CD8-positive, alpha-beta T cell (primary cell): ENCODE measurements at regions of chr11 and their contacts with region 1.

Region 1: GRCh38 chr11:47932544-47932943 is 47.8 kb upstream of the PTPRJ start:
- DNase-seq: no peak
- ATAC-seq: no peak
- H3K4me3 ChIP-seq: no peak overlapping the region
- H3K4me3 Mint-ChIP-seq: no peak overlapping the region
- H3K27ac ChIP-seq: no peak overlapping the region
- H3K27ac Mint-ChIP-seq: no peak overlapping the region
- H3K4me1 ChIP-seq: peaks cover 9% of the 10 kb centered on the region
- H3K4me1 Mint-ChIP-seq: peaks cover 14% of the 10 kb centered on the region
- H3K27me3 ChIP-seq: no peaks in the 10 kb centered on the region
- H3K27me3 Mint-ChIP-seq: no peaks in the 10 kb centered on the region
- CTCF ChIP-seq: no peak

Region 2: DNA sequence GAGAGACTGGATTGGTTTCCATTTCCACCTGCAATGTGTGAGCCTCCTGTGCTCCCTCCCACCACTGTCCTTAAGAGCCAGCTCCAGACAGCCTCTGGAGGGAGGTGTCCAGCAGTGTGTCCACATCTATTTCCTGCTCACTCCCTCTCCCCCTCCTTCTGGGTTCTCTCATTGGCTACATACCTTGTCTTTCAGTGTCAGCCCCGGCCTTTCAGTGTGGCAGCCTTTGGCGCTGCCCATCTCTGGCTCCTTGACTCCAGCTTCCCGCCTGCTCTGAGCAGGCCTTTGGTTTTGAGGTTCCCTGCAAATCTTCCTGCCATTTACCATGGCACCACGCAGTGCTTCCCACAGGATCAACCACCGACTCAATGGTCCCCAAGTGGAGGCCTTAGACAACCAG is 28.8 kb after region 1 on chr11:
- CTCF ChIA-PET with region 1: interaction called, 22 read pairs
- POLR2A ChIA-PET with region 1: interaction called, 4 read pairs
- intact Hi-C with region 1: no loop called
- DNase-seq: no peak
- ATAC-seq: no peak
- H3K4me3 ChIP-seq: no peak overlapping the region
- H3K4me3 Mint-ChIP-seq: no peak overlapping the region
- H3K27ac ChIP-seq: no peak overlapping the region
- H3K27ac Mint-ChIP-seq: no peak overlapping the region
- H3K4me1 ChIP-seq: no peaks in the 10 kb centered on the region
- H3K4me1 Mint-ChIP-seq: no peaks in the 10 kb centered on the region
- H3K27me3 ChIP-seq: no peaks in the 10 kb centered on the region
- H3K27me3 Mint-ChIP-seq: no peaks in the 10 kb centered on the region
- CTCF ChIP-seq: no peak

Region 3: GRCh38 chr11:48020092-48020755 is 87.7 kb after region 1 on chr11:
- CTCF ChIA-PET with region 1: interaction called, 7 read pairs
- POLR2A ChIA-PET with region 1: no interaction called
- intact Hi-C with region 1: loop called in 1 of 2 experiments (anchors 5 kb)
- DNase-seq: peak in 2 of 9 experiments; percentile 75 to 83
- ATAC-seq: peak; percentile 32
- H3K4me3 ChIP-seq: no peak overlapping the region
- H3K4me3 Mint-ChIP-seq: peak overlapping the region; percentile 22
- H3K27ac ChIP-seq: peak overlapping the region in 1 of 2 experiments; percentile 91
- H3K27ac Mint-ChIP-seq: peak overlapping the region; percentile 80
- H3K4me1 ChIP-seq: peaks cover 50% of the 10 kb centered on the region
- H3K4me1 Mint-ChIP-seq: peaks cover 62% of the 10 kb centered on the region
- H3K27me3 ChIP-seq: no peaks in the 10 kb centered on the region
- H3K27me3 Mint-ChIP-seq: no peaks in the 10 kb centered on the region
- CTCF ChIP-seq: no peak

Region 4: GRCh38 chr11:48101958-48102357 is 169.4 kb after region 1 on chr11:
- CTCF ChIA-PET with region 1: interaction called, 340 read pairs
- POLR2A ChIA-PET with region 1: interaction called, 7 read pairs
- intact Hi-C with region 1: no loop called
- DNase-seq: peak in 1 of 9 experiments; percentile 7
- ATAC-seq: no peak
- H3K4me3 ChIP-seq: no peak overlapping the region
- H3K4me3 Mint-ChIP-seq: no peak overlapping the region
- H3K27ac ChIP-seq: no peak overlapping the region
- H3K27ac Mint-ChIP-seq: peak overlapping the region; percentile 17
- H3K4me1 ChIP-seq: peaks cover under 1% of the 10 kb centered on the region
- H3K4me1 Mint-ChIP-seq: peaks cover 37% of the 10 kb centered on the region
- H3K27me3 ChIP-seq: no peaks in the 10 kb centered on the region
- H3K27me3 Mint-ChIP-seq: no peaks in the 10 kb centered on the region
- CTCF ChIP-seq: no peak

Region 5: DNA sequence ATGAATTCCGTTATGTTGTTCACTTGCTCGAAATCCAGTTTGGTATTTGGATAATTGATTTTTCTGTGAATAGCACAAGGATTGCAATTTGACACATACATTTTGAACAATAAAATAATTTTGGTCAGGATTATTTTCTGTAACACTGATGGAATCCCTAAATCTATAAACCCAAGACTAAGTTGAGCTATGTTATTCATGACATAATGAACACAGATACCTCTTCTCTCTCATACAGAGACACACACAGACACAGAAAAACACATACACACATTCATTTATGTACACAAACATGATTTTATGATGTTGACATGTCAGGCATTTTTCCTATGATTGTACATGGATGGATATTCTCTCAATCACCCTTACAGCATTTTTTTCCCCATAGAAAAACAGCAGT is 433.8 kb after region 1 on chr11 and contains the start of gene OR4C5:
- CTCF ChIA-PET with region 1: no interaction called
- POLR2A ChIA-PET with region 1: no interaction called
- intact Hi-C with region 1: no loop called
- DNase-seq: no peak
- ATAC-seq: no peak
- H3K4me3 ChIP-seq: no peak within 1 kb of the TSS
- H3K4me3 Mint-ChIP-seq: no peak within 1 kb of the TSS
- H3K27ac ChIP-seq: no peak within 1 kb of the TSS
- H3K27ac Mint-ChIP-seq: no peak within 1 kb of the TSS
- H3K4me1 ChIP-seq: no peaks in the 10 kb centered on the region
- H3K4me1 Mint-ChIP-seq: no peaks in the 10 kb centered on the region
- H3K27me3 ChIP-seq: no peaks in the 10 kb centered on the region
- H3K27me3 Mint-ChIP-seq: no peaks in the 10 kb centered on the region
- CTCF ChIP-seq: no peak
- total RNA-seq, gene OR4C5: not detected